Activated CD8-positive, alpha-beta memory T cell treated with anti-CD3 and anti-CD28 coated beads, Interleukin-2, amount 10 ng/mL, durations not matched to agents 7 days and 5 days (primary cell): ENCODE measurements at regions of chr2 and their contacts with region 1.

Region 1: GRCh38 chr2:26330113-26330549 is 15.8 kb upstream of the SELENOI start:
- DNase-seq: peak; percentile 92
- ATAC-seq: peak; percentile 95
- H3K4me3 Mint-ChIP-seq: no peak overlapping the region
- H3K27ac Mint-ChIP-seq: peak overlapping the region; percentile 16
- H3K4me1 Mint-ChIP-seq: peaks cover 38% of the 10 kb centered on the region
- H3K27me3 Mint-ChIP-seq: no peaks in the 10 kb centered on the region

Region 2: DNA sequence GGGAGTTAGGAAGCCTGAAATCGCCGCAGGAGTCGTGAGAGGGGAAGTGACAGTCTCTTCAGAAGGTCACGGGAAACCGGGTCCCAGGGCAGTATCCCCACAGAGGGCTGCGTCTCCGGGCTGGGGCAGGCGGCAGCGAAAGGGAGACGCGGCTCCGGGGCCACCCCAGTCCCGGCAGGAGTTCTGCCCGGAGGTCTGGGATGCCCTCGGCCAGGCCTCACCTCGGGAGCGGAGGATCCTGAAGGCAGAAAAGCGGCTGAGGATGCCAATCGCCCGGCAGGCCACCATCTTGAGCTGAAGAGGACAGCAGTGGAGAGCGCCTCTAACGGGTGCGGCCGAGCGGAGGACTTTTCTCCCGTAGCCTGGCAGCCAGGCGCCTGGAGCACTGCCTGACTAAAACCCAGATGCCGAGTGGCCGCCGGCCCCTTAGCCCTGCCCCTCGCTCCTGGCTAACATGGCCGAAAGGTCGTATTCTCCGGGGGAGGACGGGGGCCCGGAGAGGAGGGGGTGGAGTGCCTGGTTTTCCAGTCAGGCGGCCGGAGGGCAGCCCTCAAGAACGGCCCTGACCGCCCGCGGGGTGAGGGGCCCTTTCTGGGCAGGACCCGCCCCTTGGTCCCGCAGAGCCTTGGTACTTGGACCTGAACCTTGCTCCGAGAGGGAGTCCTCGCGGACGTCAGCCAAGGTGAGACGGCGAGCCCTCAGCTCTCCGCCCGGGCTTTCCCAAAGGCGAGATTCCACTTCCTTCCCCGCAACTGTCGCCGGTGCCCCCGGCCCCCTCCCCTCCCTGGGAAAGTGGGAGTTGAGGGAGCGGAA is 85.6 kb before region 1 on chr2 and contains the starts of genes HADHA and HADHB:
- CTCF ChIA-PET with region 1: interaction called, 11 read pairs
- DNase-seq: peak; percentile 89
- ATAC-seq: peak; percentile 83
- H3K4me3 Mint-ChIP-seq: peak within 1 kb of the TSS; percentile 96
- H3K27ac Mint-ChIP-seq: peak within 1 kb of the TSS; percentile 99
- H3K4me1 Mint-ChIP-seq: peaks cover 47% of the 10 kb centered on the region
- H3K27me3 Mint-ChIP-seq: no peaks in the 10 kb centered on the region
- total RNA-seq, gene HADHA: 117 to 145 TPM
- total RNA-seq, gene HADHB: 55.8 to 83.5 TPM

Region 3: DNA sequence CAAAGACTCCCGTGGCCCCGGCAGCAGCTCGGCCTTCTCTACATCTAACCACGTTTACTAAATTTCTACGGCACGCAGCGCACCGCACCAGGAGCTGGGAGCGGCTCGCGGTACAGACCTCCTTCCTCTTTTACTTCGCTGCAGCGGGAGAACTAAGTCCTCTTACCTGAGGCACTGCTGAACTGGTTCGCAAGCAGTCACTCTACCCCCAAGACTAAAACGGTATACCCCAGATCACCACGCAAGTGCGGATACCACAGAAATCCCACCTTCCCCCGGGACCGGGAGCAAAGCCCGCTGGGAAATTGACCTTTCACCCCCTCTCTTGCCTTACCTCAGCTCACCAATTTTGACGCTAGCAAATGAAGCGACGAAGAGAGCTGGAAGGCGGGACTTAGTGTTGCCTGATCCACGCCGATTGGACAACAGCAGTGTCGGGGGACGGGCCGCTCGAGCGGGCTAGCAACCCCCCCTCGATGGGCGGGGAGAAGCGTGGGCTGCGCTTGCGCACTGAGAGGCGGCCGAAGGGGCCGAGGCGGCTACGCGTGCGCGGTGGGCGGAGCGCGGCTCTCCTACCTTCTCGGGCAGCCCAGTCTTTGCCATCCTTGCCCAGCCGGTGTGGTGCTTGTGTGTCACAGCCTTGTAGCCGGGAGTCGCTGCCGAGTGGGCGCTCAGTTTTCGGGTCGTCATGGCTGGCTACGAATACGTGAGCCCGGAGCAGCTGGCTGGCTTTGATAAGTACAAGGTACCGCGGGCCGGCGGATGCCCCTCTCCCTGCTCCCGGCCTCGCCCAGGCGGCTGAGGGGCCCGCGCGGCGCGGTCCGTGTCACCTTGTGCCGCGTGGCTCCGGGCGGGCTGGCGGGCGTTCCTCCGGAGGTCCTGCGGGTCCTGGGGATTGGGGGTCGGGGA is 15.7 kb after region 1 on chr2 and contains the start of gene SELENOI:
- CTCF ChIA-PET with region 1: interaction called, 14 read pairs
- DNase-seq: peak; percentile 99
- ATAC-seq: peak; percentile 95
- H3K4me3 Mint-ChIP-seq: peak within 1 kb of the TSS; percentile 91
- H3K27ac Mint-ChIP-seq: peak within 1 kb of the TSS; percentile 96
- H3K4me1 Mint-ChIP-seq: peaks cover 44% of the 10 kb centered on the region
- H3K27me3 Mint-ChIP-seq: no peaks in the 10 kb centered on the region
- total RNA-seq, gene SELENOI: 38.4 to 41.3 TPM